Panc1 (cell line): ENCODE measurements at regions of chr15 and their contacts with region 1.

Region 1: DNA sequence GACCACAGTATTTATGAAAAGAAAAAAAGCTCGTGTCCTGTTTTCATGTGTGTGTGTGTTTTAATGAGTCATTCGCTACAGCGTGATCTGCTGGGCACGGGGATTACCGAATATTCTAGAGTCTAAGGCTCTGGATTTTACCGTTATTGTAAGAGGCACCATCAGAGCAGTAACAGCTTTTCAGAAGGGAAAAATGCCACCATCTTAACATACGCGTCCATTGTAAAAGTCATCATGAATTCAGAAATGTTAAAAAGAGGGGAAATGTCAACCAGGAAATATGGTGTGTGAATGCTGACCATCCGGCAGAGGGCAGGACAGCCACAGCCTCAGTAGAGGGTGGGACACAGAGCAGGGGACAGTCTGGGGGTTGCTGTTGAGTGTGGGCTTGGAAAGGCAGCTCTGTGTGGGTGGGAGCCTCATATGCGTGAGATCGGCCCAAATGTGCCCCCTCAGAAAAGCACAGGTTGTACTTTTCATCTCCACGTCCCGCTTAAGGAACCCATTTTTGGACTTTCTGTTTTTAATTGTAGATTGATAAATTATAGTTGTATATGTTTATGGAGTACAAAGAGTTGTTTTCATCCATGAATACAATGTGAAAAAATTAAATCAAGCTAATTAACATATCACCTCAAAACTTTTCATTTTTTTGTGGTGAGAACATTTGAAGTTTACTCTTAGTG is 69.6 kb downstream of the ASB7 start:
- DNase-seq: peak; percentile 30
- ATAC-seq: peak; percentile 97
- H3K4me3 ChIP-seq: peak overlapping the region in 1 of 2 experiments; percentile 31; a peak in 2 of 4 replicates
- H3K27ac ChIP-seq: peak overlapping the region; percentile 72
- H3K4me1 ChIP-seq: peaks cover 12% of the 10 kb centered on the region
- H3K27me3 ChIP-seq: no peaks in the 10 kb centered on the region
- CTCF ChIP-seq: peak; percentile 90

Region 2: GRCh38 chr15:100721770-100722550 is 50.0 kb after region 1 on chr15:
- CTCF ChIA-PET with region 1: no interaction called
- POLR2A ChIA-PET with region 1: interaction called, 10 read pairs
- in situ Hi-C with region 1: no loop called
- intact Hi-C with region 1: no loop called
- DNase-seq: peak; percentile 93
- ATAC-seq: peak; percentile 91
- H3K4me3 ChIP-seq: peak overlapping the region in 1 of 2 experiments; percentile 21; a peak in 2 of 4 replicates
- H3K27ac ChIP-seq: peak overlapping the region; percentile 98
- H3K4me1 ChIP-seq: peaks cover 56% of the 10 kb centered on the region
- H3K27me3 ChIP-seq: no peaks in the 10 kb centered on the region
- CTCF ChIP-seq: no peak

Region 3: GRCh38 chr15:100873029-100873677 is 201.2 kb after region 1 on chr15:
- CTCF ChIA-PET with region 1: interaction called, 6 read pairs
- POLR2A ChIA-PET with region 1: no interaction called
- in situ Hi-C with region 1: no loop called
- intact Hi-C with region 1: loop called (anchors 2 kb)
- DNase-seq: peak; percentile 80
- ATAC-seq: peak; percentile 79
- H3K4me3 ChIP-seq: no peak overlapping the region
- H3K27ac ChIP-seq: peak overlapping the region; percentile 40; the same call in 1 of the 2 replicates
- H3K4me1 ChIP-seq: peaks cover 6% of the 10 kb centered on the region; the same call in 1 of the 2 replicates
- H3K27me3 ChIP-seq: no peaks in the 10 kb centered on the region
- CTCF ChIP-seq: peak; percentile 89